ENCODE measurements at regions of chr11 and their contacts with region 1.

Region 1: GRCh38 chr11:535519-536454 is at the start of gene HRAS:
- DNase-seq: peak; percentile 89 to 99 (median 96)
- ATAC-seq: peak; percentile 90
- H3K4me3 ChIP-seq: peak within 1 kb of the TSS; percentile 71
- H3K4me3 Mint-ChIP-seq: peak within 1 kb of the TSS; percentile 98
- H3K27ac ChIP-seq: peak within 1 kb of the TSS; percentile 73 to 79
- H3K27ac Mint-ChIP-seq: peak within 1 kb of the TSS; percentile 93
- H3K4me1 ChIP-seq: peaks cover 44% of the 10 kb centered on the region
- H3K4me1 Mint-ChIP-seq: peaks cover 16% of the 10 kb centered on the region
- H3K27me3 ChIP-seq: no peaks in the 10 kb centered on the region
- H3K27me3 Mint-ChIP-seq: no peaks in the 10 kb centered on the region
- CTCF ChIP-seq: no peak
- total RNA-seq, gene HRAS: 23.7 to 23.9 TPM

Region 2: GRCh38 chr11:456533-456932 is 79.3 kb before region 1 on chr11:
- CTCF ChIA-PET with region 1: no interaction called
- POLR2A ChIA-PET with region 1: no interaction called
- intact Hi-C with region 1: no loop called
- DNase-seq: peak in 7 of 14 experiments; percentile 16 to 75 (median 55)
- ATAC-seq: peak; percentile 95
- H3K4me3 ChIP-seq: peak overlapping the region; percentile 9
- H3K4me3 Mint-ChIP-seq: peak overlapping the region; percentile 79
- H3K27ac ChIP-seq: no peak overlapping the region
- H3K27ac Mint-ChIP-seq: peak overlapping the region; percentile 92
- H3K4me1 ChIP-seq: peaks cover 31% of the 10 kb centered on the region
- H3K4me1 Mint-ChIP-seq: peaks cover 26% of the 10 kb centered on the region
- H3K27me3 ChIP-seq: no peaks in the 10 kb centered on the region
- H3K27me3 Mint-ChIP-seq: no peaks in the 10 kb centered on the region
- CTCF ChIP-seq: no peak

Region 3: GRCh38 chr11:518463-519250 is 17.1 kb before region 1 on chr11:
- CTCF ChIA-PET with region 1: interaction called, 3 read pairs
- POLR2A ChIA-PET with region 1: interaction called, 6 read pairs
- intact Hi-C with region 1: loop called in 1 of 2 experiments (anchors 2 kb)
- DNase-seq: peak; percentile 79 to 95 (median 86)
- ATAC-seq: peak; percentile 94
- H3K4me3 ChIP-seq: peak overlapping the region; percentile 43
- H3K4me3 Mint-ChIP-seq: peak overlapping the region; percentile 85
- H3K27ac ChIP-seq: peak overlapping the region in 1 of 2 donors; percentile 41
- H3K27ac Mint-ChIP-seq: no peak overlapping the region
- H3K4me1 ChIP-seq: peaks cover 8% of the 10 kb centered on the region
- H3K4me1 Mint-ChIP-seq: peaks cover 4% of the 10 kb centered on the region
- H3K27me3 ChIP-seq: no peaks in the 10 kb centered on the region
- H3K27me3 Mint-ChIP-seq: no peaks in the 10 kb centered on the region
- CTCF ChIP-seq: peak; percentile 96

Region 4: DNA sequence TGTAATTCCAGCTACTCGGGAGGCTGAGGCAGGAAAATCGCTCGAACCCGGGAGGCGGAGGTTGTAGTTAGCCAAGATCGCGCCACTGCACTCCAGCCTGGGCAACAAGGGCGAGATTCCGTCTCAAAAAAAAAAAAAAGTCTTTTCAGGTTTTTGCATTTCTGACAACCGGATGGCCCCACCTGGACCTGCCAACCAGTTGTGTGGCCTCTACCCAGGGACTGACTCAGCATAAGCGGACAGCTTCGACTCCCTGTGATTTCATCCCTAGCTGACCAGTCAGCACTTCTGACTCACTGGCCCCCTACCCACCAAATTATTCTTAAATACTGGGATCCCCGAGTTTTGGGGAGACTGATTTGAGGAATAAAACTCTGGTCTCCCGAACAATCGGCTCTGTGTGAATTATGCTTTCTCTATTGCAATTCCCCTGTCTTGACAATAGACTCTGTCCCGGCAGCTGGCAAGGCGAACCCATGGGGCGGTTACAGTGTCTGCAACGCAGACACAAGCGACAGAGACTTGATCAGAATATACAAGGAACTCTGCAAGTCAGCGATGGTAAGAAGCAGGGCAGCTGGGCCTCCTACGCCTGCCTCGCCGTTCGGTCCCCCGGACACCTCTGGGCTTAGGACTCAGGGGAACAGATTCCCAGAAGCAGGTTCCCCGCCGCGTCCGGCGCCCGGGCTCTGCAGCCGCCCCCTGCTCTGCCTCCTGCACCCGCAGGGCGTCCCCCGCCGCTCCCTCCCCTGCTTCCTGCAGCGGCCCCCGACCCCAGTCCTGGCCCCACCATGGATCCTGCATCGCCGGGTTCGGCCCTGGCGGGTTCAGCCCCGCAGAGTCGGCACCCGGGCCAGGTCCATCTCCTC is 210.7 kb after region 1 on chr11:
- CTCF ChIA-PET with region 1: no interaction called
- POLR2A ChIA-PET with region 1: no interaction called
- intact Hi-C with region 1: no loop called
- DNase-seq: peak in 10 of 14 experiments; percentile 15 to 65 (median 30)
- ATAC-seq: peak; percentile 60
- H3K4me3 ChIP-seq: peak overlapping the region; percentile 63
- H3K4me3 Mint-ChIP-seq: peak overlapping the region; percentile 85
- H3K27ac ChIP-seq: peak overlapping the region in 1 of 2 donors; percentile 46
- H3K27ac Mint-ChIP-seq: peak overlapping the region; percentile 73
- H3K4me1 ChIP-seq: peaks cover 23% of the 10 kb centered on the region
- H3K4me1 Mint-ChIP-seq: peaks cover 18% of the 10 kb centered on the region
- H3K27me3 ChIP-seq: no peaks in the 10 kb centered on the region
- H3K27me3 Mint-ChIP-seq: no peaks in the 10 kb centered on the region
- CTCF ChIP-seq: no peak

Region 5: DNA sequence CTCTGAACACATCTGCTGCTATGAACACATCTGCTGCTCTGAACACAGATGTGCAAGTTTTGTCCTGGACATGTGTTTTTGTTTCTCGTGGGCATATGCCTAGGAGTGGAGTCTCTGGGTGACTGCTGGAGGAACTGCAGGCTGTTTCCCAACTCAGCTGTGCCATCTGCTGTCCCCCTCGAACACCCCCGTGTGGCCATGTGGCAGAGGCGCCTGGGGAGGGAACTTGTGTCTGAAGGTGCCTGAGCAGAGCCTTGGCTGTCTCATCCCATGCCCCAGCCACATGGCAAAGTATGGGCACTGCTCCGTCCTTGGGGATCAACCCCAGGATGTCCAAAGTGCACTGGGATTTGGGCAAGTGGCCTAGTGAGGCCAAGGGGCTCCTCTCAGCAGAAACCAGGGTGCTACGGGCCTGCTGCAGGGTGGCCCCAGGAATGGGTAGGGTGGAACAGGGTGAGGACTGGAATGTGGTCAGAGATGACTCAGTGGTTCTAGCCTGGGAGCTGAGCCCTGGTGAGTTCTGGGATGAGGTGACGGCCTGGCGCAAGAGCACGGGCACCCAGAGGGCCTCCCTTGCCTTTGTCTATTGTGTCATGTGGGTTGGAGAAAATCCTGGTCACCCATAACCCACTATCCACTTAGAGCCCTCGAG is 226.8 kb after region 1 on chr11:
- CTCF ChIA-PET with region 1: no interaction called
- POLR2A ChIA-PET with region 1: no interaction called
- intact Hi-C with region 1: no loop called
- DNase-seq: peak in 3 of 14 experiments; percentile 18 to 42 (median 34)
- ATAC-seq: no peak
- H3K4me3 ChIP-seq: no peak overlapping the region
- H3K4me3 Mint-ChIP-seq: no peak overlapping the region
- H3K27ac ChIP-seq: no peak overlapping the region
- H3K27ac Mint-ChIP-seq: no peak overlapping the region
- H3K4me1 ChIP-seq: peaks cover 4% of the 10 kb centered on the region
- H3K4me1 Mint-ChIP-seq: no peaks in the 10 kb centered on the region
- H3K27me3 ChIP-seq: no peaks in the 10 kb centered on the region
- H3K27me3 Mint-ChIP-seq: no peaks in the 10 kb centered on the region
- CTCF ChIP-seq: no peak

Measured in CD4-positive, alpha-beta T cell (primary cell).